H1 (cell line): ENCODE measurements at regions of chr20 and their contacts with region 1.

Region 1: DNA sequence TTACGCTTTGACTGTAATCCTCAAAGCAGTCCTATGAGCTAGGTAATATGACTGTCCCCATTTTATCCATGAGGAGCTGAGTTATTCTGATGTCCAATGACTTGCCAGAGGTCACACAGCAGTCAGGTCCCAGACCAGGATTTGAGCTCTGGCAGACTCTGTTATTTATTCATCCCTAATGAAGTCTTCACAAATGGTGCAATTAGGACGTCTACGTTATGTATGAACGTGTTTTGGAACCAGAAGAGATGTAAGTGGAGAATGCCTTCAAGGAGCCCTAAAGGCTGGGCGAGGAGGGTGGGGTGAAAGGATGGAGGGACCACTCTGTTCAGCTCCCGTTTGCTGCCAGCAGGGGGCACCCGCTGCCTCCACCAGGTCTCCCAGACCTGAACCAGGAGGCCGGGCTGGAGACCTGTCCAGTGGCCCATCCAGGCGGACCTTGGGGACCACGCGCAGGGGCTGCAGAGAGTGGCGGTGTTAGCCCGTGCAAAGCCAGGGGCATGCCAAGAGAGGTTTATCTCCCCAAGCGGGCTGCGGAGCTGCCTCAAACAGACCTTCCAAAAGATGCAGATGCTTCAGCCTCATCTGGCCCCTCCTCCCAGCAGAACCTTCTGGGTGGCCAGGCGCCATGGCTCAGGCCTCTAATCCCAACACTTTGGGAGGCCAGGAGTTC is 15.2 kb upstream of the ZNF335 start:
- DNase-seq: peak in 1 of 2 experiments; percentile 95
- H3K4me3 ChIP-seq: no peak overlapping the region
- H3K27ac ChIP-seq: no peak overlapping the region
- H3K4me1 ChIP-seq: peaks cover 0 to 8% (median 6%) of the 10 kb centered on the region in 4 experiments; a peak in 5 of 7 replicates
- H3K27me3 ChIP-seq: no peaks in the 10 kb centered on the region
- CTCF ChIP-seq: peak; percentile 90 to 96 (median 95)
- EP300 ChIP-seq: no peak
- POLR2A ChIP-seq: no peak
- RAD21 ChIP-seq: peak; percentile 79 to 89

Region 2: DNA sequence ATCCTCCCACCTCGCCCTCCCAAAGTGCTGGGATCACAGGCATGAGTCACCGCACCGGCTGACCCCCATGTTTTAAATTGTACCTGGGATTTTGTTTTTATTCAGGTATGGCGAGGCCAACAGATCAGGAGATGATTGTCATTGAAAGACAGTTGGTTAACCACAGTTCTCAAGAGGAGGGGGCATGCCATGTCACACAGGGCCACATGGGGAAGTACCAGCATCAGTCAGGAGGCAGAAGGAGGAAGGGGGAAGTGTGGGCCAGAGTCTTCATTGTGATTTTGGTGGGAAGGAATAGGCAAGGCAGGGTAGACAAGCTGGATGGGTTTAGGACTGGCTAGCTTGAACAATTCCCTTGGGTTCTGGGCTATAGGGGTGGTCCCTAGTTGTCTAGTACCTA is 11.5 kb after region 1 on chr20:
- CTCF ChIA-PET with region 1: interaction called, 32 read pairs
- POLR2A ChIA-PET with region 1: interaction called, 12 read pairs
- DNase-seq: no peak
- H3K4me3 ChIP-seq: no peak overlapping the region
- H3K27ac ChIP-seq: no peak overlapping the region
- H3K4me1 ChIP-seq: peaks cover 0 to 8% (median 5%) of the 10 kb centered on the region in 4 experiments; a peak in 6 of 7 replicates
- H3K27me3 ChIP-seq: no peaks in the 10 kb centered on the region
- CTCF ChIP-seq: no peak
- EP300 ChIP-seq: no peak
- POLR2A ChIP-seq: no peak
- RAD21 ChIP-seq: no peak

Region 3: DNA sequence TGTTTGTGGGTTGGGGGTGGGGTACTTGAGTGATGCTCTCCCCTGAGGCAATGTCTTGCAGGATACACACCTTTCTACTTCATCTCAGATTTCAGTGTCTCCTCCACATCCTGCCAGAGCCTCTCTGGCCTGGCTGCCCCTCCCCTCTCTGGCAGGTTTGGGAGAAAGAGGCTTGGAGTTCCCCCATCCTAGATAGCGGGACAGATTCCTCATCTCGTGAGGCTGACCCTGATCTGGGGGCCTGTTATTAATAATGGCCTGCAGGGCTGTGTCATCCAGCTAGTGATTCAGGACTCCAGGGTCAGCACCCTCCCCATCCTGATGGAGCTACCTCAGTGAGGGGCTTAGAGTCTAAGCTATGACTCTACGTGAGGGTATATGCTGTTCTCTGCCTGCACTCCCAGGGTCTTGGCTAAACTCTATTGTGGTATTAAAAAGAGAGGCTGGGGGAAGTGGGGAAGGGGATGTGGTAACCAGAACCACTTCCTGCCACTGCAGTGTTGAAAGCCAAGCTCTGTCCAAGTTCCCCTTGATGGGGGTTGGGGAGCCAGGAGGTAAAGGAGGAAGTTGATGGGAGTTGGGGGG is 17.7 kb after region 1 on chr20:
- CTCF ChIA-PET with region 1: interaction called, 32 read pairs
- POLR2A ChIA-PET with region 1: interaction called, 12 read pairs
- DNase-seq: no peak
- H3K4me3 ChIP-seq: peak overlapping the region in 1 of 4 experiments; percentile 4; a peak in 2 of 8 replicates
- H3K27ac ChIP-seq: no peak overlapping the region
- H3K4me1 ChIP-seq: peaks cover 12 to 34% (median 17%) of the 10 kb centered on the region in 4 experiments
- H3K27me3 ChIP-seq: no peaks in the 10 kb centered on the region
- CTCF ChIP-seq: no peak
- EP300 ChIP-seq: no peak
- POLR2A ChIP-seq: no peak
- RAD21 ChIP-seq: no peak

Region 4: GRCh38 chr20:46022411-46023147 is 35.3 kb after region 1 on chr20:
- CTCF ChIA-PET with region 1: interaction called, 16 read pairs
- POLR2A ChIA-PET with region 1: no interaction called
- DNase-seq: peak in 1 of 2 experiments; percentile 92
- H3K4me3 ChIP-seq: peak overlapping the region; percentile 51 to 81 (median 71)
- H3K27ac ChIP-seq: no peak overlapping the region
- H3K4me1 ChIP-seq: no peaks in the 10 kb centered on the region; a peak in 1 of 7 replicates
- H3K27me3 ChIP-seq: peaks cover 2 to 45% (median 15%) of the 10 kb centered on the region in 4 experiments
- CTCF ChIP-seq: peak; percentile 75 to 78 (median 76)
- EP300 ChIP-seq: no peak
- POLR2A ChIP-seq: no peak
- RAD21 ChIP-seq: peak; percentile 75 to 82